ENCODE measurements at regions of chr12 and their contacts with region 1.

Region 1: GRCh38 chr12:9750276-9751203 is 10.2 kb downstream of the CD69 start:
- DNase-seq: peak; percentile 70
- H3K4me3 Mint-ChIP-seq: no peak overlapping the region
- H3K27ac Mint-ChIP-seq: no peak overlapping the region
- H3K4me1 Mint-ChIP-seq: no peaks in the 10 kb centered on the region
- H3K27me3 Mint-ChIP-seq: peaks cover 32% of the 10 kb centered on the region
- CTCF ChIP-seq: peak; percentile 71

Region 2: GRCh38 chr12:9760699-9761418 is 10.3 kb after region 1 on chr12 and contains the start of gene CD69:
- CTCF ChIA-PET with region 1: interaction called, 29 read pairs
- POLR2A ChIA-PET with region 1: no interaction called
- intact Hi-C with region 1: no loop called
- DNase-seq: no peak
- H3K4me3 Mint-ChIP-seq: no peak within 1 kb of the TSS
- H3K27ac Mint-ChIP-seq: no peak within 1 kb of the TSS
- H3K4me1 Mint-ChIP-seq: no peaks in the 10 kb centered on the region
- H3K27me3 Mint-ChIP-seq: peaks cover 57% of the 10 kb centered on the region
- CTCF ChIP-seq: no peak
- total RNA-seq, gene CD69: not detected in 2 replicates

Region 3: GRCh38 chr12:9813821-9814809 is 63.6 kb after region 1 on chr12:
- CTCF ChIA-PET with region 1: interaction called, 20 read pairs
- POLR2A ChIA-PET with region 1: no interaction called
- intact Hi-C with region 1: loop called (anchors 5 kb)
- DNase-seq: peak; percentile 69
- H3K4me3 Mint-ChIP-seq: peak overlapping the region; percentile 57
- H3K27ac Mint-ChIP-seq: no peak overlapping the region
- H3K4me1 Mint-ChIP-seq: no peaks in the 10 kb centered on the region
- H3K27me3 Mint-ChIP-seq: no peaks in the 10 kb centered on the region
- CTCF ChIP-seq: peak; percentile 86

Region 4: DNA sequence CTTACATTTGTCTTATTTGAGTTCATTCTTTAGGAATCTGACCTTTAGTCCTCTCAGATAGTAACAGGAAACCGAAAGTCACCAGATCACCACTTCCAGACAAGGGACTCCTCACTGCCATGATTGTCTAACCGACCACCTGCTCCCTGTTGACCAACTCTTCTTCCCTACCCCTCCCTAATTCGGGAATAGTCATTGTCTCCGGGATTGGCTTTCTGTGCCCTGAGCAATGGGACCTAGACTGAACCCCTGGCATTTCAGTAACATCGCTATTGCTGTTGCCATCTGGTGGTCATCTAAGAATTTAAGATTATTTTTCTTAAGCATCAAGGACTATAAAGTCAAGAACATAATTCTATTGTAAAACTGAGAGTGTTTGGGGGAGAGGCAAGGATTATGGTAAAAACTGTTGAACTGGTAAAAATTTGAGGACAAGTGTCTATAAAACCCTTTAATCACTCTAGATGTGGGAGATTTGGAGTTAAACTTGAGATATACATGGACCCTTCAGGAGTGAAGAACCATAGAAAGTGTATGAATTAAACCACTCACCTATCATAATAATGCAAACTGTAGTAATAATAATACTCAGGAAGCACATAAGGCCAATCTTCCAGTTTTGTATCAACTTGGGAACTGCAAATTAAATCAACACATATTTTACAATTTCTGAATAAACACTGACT is 175.3 kb after region 1 on chr12:
- CTCF ChIA-PET with region 1: interaction called, 46 read pairs
- POLR2A ChIA-PET with region 1: interaction called, 4 read pairs
- intact Hi-C with region 1: loop called (anchors 1 kb)
- DNase-seq: peak; percentile 57
- H3K4me3 Mint-ChIP-seq: peak overlapping the region; percentile 33
- H3K27ac Mint-ChIP-seq: no peak overlapping the region
- H3K4me1 Mint-ChIP-seq: peaks cover 6% of the 10 kb centered on the region
- H3K27me3 Mint-ChIP-seq: no peaks in the 10 kb centered on the region
- CTCF ChIP-seq: peak; percentile 46

Region 5: DNA sequence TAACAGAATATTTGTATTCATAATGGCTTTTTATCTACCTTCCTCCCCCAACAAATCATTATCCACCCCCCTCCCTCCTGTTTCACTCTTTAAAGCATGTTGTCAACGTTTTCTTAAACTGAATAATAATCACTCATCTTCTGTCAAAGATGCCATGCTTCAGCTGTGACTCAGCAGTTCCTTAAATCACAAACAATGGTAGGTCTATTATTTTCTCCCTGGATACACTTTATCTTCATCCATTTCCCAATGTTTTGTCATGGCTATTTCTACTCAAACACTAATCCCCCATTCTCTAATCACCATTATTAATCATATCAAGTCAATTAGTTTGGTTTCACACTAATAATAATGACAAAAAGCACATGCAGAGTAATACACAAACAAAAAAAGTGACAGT is 266.3 kb after region 1 on chr12:
- CTCF ChIA-PET with region 1: interaction called, 47 read pairs
- POLR2A ChIA-PET with region 1: no interaction called
- intact Hi-C with region 1: no loop called
- DNase-seq: peak; percentile 37
- H3K4me3 Mint-ChIP-seq: no peak overlapping the region
- H3K27ac Mint-ChIP-seq: peak overlapping the region; percentile 2
- H3K4me1 Mint-ChIP-seq: peaks cover 8% of the 10 kb centered on the region
- H3K27me3 Mint-ChIP-seq: no peaks in the 10 kb centered on the region
- CTCF ChIP-seq: no peak

Region 6: DNA sequence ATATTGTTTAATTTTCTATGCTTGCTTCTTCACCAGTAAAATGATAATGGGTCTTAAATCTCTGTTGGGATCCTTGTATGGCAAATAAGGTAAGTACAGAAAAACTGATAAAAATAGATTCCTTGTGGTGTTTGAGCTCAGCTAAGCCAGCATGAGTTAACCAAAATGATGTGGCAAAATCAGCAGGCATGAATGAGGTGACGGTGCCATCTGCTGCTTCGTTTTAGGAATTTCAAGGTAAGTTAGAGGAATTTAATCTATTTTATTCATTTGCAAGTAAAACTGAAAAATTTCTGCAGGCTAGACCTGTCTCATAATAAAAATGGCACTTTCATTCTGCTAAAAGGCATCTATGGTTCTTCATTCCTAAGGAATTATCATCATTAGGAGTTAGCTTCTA is 389.5 kb after region 1 on chr12:
- CTCF ChIA-PET with region 1: interaction called, 76 read pairs
- POLR2A ChIA-PET with region 1: interaction called, 3 read pairs
- intact Hi-C with region 1: loop called (anchors 2 kb)
- DNase-seq: peak; percentile 72
- H3K4me3 Mint-ChIP-seq: no peak overlapping the region
- H3K27ac Mint-ChIP-seq: no peak overlapping the region
- H3K4me1 Mint-ChIP-seq: no peaks in the 10 kb centered on the region
- H3K27me3 Mint-ChIP-seq: no peaks in the 10 kb centered on the region
- CTCF ChIP-seq: peak; percentile 69